Caco-2 (cell line): ENCODE measurements at regions of chr1 and their contacts with region 1.

Region 1: DNA sequence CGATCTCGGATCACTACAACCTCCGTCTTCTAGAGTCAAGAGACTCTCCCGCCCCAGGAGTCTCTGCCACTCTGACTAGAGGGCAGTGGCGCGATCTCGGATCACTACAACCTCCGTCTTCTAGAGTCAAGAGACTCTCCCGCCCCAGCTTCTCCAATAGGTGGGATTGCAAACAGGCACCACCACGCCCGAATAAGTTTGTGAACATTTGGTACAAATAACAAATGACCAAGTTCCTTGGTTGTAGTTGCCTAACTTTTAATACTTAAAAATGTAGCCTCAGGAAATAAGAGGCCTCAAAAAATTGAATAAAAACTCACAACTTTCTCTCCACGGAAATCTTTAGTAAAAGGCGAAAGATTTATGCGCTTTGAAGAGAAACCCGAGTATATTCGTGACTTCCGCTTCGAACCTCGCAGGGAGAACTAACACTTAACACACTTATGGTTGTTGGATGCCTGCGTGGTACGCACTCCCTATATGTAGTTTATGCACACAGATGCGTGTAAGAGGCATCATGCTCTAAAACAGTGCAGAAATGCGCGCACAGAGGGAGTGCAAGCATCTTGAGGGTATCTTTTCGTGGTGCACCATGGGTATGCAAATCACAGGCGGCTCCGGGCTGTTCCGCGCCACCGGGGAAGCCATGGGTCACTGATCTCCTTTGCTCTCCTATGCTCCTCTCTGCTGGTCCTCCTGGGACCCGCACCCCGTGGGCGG is 11.4 kb downstream of the BTBD19 start:
- DNase-seq: peak; percentile 86 to 95
- H3K4me3 ChIP-seq: peak overlapping the region; percentile 49
- H3K4me3 Mint-ChIP-seq: peak overlapping the region; percentile 80
- H3K27ac Mint-ChIP-seq: peak overlapping the region; percentile 100
- H3K4me1 ChIP-seq: 0 out of 2 replicates have a peak, but pooled peaks cover 7% of the 10 kb centered on the region
- H3K4me1 Mint-ChIP-seq: peaks cover 8% of the 10 kb centered on the region
- H3K27me3 ChIP-seq: no peaks in the 10 kb centered on the region
- H3K27me3 Mint-ChIP-seq: no peaks in the 10 kb centered on the region
- CTCF ChIP-seq: no peak

Region 2: GRCh38 chr1:44249543-44249942 is 570.2 kb before region 1 on chr1:
- CTCF ChIA-PET with region 1: no interaction called
- POLR2A ChIA-PET with region 1: no interaction called
- intact Hi-C with region 1: no loop called
- DNase-seq: no peak
- H3K4me3 ChIP-seq: no peak overlapping the region
- H3K4me3 Mint-ChIP-seq: no peak overlapping the region
- H3K27ac Mint-ChIP-seq: no peak overlapping the region
- H3K4me1 ChIP-seq: no peaks in the 10 kb centered on the region
- H3K4me1 Mint-ChIP-seq: no peaks in the 10 kb centered on the region
- H3K27me3 ChIP-seq: no peaks in the 10 kb centered on the region
- H3K27me3 Mint-ChIP-seq: no peaks in the 10 kb centered on the region
- CTCF ChIP-seq: no peak

Region 3: GRCh38 chr1:44721485-44722361 is 98.0 kb before region 1 on chr1:
- CTCF ChIA-PET with region 1: no interaction called
- POLR2A ChIA-PET with region 1: interaction called, 11 read pairs
- intact Hi-C with region 1: no loop called
- DNase-seq: peak; percentile 70 to 87
- H3K4me3 ChIP-seq: no peak overlapping the region
- H3K4me3 Mint-ChIP-seq: no peak overlapping the region
- H3K27ac Mint-ChIP-seq: peak overlapping the region; percentile 80
- H3K4me1 ChIP-seq: no peaks in the 10 kb centered on the region
- H3K4me1 Mint-ChIP-seq: peaks cover 3% of the 10 kb centered on the region
- H3K27me3 ChIP-seq: no peaks in the 10 kb centered on the region
- H3K27me3 Mint-ChIP-seq: no peaks in the 10 kb centered on the region
- CTCF ChIP-seq: no peak

Region 4: DNA sequence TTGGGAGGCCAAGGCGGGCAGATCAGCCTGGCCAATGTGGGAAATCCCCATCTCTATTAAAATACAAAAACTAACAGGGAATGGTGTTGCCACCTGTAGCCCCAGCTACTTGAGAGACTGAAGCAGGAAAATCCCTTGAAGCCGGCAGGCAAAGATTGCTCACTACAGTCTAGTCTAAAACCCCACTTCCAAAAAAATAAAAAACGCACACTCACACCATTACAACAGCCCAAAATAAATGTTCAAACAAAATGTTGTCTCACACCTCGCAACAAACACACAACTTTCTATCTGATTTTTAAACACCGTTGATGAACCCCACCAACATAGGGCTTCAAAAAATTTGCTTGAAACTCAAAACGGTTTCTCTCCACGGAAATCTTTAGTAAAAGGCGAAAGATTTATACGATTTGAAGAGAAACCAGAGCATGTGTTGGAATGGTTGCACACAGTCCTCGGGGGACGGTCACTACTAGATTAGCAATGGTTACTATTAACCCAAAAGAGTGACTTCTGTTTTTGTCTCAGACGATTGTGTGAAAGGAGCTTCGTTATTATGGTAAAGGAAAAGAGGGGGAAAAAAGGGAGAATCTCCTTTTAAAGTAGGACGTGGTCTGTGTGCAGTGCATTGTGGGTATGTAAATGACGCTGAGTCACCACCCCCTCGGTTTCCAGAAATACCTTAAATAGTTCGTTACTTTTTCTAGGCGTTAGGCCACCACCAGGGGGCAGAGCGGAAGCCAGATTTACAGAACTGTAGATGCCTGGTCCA is 88.8 kb before region 1 on chr1 and contains the start of gene RNU5D-1:
- CTCF ChIA-PET with region 1: interaction called, 4 read pairs
- POLR2A ChIA-PET with region 1: interaction called, 21 read pairs
- intact Hi-C with region 1: loop called (anchors 1 kb)
- DNase-seq: peak; percentile 90
- H3K4me3 ChIP-seq: peak within 1 kb of the TSS; percentile 18; the same call in 1 of the 2 replicates
- H3K4me3 Mint-ChIP-seq: peak within 1 kb of the TSS; percentile 59
- H3K27ac Mint-ChIP-seq: peak within 1 kb of the TSS; percentile 99
- H3K4me1 ChIP-seq: no peaks in the 10 kb centered on the region
- H3K4me1 Mint-ChIP-seq: peaks cover 12% of the 10 kb centered on the region
- H3K27me3 ChIP-seq: no peaks in the 10 kb centered on the region
- H3K27me3 Mint-ChIP-seq: no peaks in the 10 kb centered on the region
- CTCF ChIP-seq: peak; percentile 69 to 78
- total RNA-seq, gene RNU5D-1: 16.3 TPM in 1 of 2 replicates, not detected in the other

Region 5: DNA sequence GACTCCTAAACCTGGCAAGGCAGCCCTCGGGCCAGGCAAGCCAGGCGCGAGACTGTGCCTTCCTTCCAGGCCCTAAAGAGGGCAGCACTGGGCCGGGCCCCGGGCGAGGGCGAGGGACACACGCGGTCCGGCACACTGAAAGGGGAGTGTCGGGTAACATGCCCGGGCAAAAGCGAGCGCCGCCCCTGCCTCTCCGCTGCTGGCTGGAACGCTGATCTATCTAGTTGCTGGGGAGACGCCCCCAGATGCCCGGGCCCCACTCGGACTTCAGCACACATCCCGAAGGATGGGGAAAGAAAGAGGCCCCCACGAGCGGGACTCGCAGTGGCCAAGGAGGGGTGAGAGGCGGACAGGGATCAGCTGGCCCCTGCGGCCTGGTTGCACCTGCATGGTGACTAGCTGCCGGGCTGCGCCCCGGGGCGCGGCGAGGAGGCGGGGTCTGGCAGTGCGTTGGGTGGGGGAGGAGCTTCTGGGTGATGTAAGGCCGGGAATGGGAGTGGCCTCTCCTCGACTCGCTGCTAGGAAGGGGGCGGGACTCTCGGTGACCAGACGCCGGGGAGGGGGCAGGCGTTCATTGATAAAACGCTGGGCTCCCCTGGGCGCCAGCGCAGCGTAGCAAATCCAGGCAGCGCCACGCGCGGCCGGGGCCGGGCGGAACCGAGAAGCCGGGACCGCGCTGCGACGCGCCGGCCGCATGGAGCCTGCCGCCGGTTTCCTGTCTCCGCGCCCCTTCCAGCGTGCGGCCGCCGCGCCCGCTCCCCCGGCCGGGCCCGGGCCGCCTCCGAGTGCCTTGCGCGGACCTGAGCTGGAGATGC is 19.8 kb before region 1 on chr1 and contains the start of gene PLK3:
- CTCF ChIA-PET with region 1: interaction called, 9 read pairs
- POLR2A ChIA-PET with region 1: interaction called, 43 read pairs
- intact Hi-C with region 1: loop called (anchors 2 kb)
- DNase-seq: peak; percentile 97
- H3K4me3 ChIP-seq: peak within 1 kb of the TSS; percentile 77
- H3K4me3 Mint-ChIP-seq: peak within 1 kb of the TSS; percentile 97
- H3K27ac Mint-ChIP-seq: peak within 1 kb of the TSS; percentile 99
- H3K4me1 ChIP-seq: no peaks in the 10 kb centered on the region
- H3K4me1 Mint-ChIP-seq: peaks cover 8% of the 10 kb centered on the region
- H3K27me3 ChIP-seq: no peaks in the 10 kb centered on the region
- H3K27me3 Mint-ChIP-seq: no peaks in the 10 kb centered on the region
- CTCF ChIP-seq: peak; percentile 72 to 89
- total RNA-seq, gene PLK3: 3.2 and 5.2 TPM in 2 replicates

Region 6: GRCh38 chr1:44807262-44808062 is 12.3 kb before region 1 on chr1 and contains the start of gene DYNLT4:
- CTCF ChIA-PET with region 1: interaction called, 6 read pairs
- POLR2A ChIA-PET with region 1: interaction called, 24 read pairs
- intact Hi-C with region 1: no loop called
- DNase-seq: peak; percentile 94 to 96
- H3K4me3 ChIP-seq: no peak within 1 kb of the TSS
- H3K4me3 Mint-ChIP-seq: peak within 1 kb of the TSS; percentile 53
- H3K27ac Mint-ChIP-seq: peak within 1 kb of the TSS; percentile 99
- H3K4me1 ChIP-seq: peaks cover 40% of the 10 kb centered on the region
- H3K4me1 Mint-ChIP-seq: peaks cover 18% of the 10 kb centered on the region
- H3K27me3 ChIP-seq: no peaks in the 10 kb centered on the region
- H3K27me3 Mint-ChIP-seq: no peaks in the 10 kb centered on the region
- CTCF ChIP-seq: no peak
- total RNA-seq, gene DYNLT4: not detected in 2 replicates